Activated CD8-positive, alpha-beta T cell treated with anti-CD3 and anti-CD28 coated beads for 36 hours (primary cell): ENCODE measurements at regions of chr22 and their contacts with region 1.

Region 1: DNA sequence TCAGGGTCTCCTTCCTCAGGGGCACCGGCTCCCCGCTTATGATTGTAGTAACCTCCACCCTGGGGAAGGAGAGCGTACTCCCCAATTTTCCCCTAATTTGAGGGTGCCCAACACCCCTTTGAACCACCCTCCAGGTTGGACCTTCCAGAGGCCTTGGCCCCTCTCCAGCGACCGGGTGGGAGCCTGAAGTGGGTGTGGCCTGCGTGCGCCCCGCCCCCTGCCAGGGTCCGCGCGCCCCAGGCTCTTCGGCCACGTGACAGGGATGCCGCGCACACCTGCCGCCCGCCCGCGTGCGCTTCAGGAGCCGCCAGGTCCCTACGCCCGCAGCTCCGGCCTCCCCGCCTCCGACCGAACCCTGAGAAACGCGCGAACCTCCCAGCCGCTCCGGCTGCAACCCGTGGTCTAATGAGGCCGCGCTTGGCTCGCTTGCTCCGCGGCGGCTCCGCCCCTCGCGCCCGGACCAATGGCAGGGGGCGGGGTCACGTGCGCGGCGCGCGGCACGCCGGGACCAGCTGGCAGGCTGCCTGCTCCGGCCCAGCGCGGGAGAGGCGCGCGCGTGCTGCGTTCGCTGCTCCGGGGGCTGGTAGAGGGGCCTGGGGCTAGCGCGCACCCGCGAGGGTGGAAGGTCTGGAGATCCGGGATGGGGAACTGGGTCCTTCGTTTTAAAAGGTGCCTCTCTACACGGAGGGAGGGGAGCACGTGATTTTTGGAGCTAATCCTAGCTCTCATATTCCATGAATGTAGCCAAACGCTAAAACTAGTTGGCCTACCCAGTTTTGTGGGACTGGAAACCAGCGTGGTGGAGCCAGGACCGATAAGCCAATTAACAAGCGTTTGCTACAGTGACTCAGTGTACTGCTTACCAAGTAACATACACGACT is at the start of gene FOXRED2:
- DNase-seq: peak; percentile 90
- ATAC-seq: peak; percentile 94
- H3K4me3 Mint-ChIP-seq: peak within 1 kb of the TSS; percentile 53
- H3K27ac Mint-ChIP-seq: peak within 1 kb of the TSS; percentile 74
- H3K4me1 Mint-ChIP-seq: peaks cover 20% of the 10 kb centered on the region
- H3K27me3 Mint-ChIP-seq: no peaks in the 10 kb centered on the region
- CTCF ChIP-seq: no peak
- total RNA-seq, gene FOXRED2: 16.7 to 17.5 TPM

Region 2: DNA sequence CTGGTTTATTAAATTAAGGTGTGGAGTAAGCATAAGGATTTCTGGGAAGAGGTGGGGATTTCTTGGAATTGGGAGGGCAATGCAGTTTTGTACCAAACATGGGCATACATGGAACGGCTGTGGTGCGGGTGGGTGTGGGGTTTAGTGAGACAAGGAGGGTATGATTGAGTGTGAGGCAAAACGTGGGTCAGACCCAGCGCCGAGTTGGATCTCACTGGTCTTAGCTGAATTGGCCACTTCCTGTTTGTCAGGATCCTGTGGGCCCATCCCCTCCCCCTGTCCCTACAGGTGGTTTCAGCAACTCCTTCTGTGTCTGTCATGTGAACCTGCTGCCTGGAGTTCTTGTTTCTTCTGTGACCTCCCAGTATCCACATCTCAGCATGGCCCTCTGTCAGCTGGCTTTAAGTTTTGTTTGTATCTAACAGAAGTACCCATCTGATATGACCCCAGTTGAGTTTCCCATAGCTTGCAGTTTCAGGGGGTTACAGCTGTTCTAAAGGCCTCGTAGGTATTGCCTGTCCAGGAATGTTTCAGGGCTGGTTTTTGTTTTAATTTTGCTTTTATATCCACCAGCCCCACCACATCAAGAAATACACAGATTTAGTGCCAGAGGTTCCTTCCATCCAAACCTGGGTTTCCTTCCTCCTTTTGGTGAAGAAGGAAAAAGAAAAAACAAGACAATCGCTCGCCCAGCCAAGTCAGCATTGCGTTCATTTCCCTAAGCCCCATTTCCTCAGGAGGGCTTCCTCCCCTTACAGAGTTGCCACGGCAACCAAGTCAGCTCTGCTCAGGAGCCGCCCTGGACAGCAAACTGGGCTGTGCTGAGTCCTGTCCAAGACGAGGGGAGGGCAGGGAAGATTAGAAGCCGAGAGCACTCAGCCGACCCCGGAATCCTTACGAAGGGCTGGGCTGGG is 247.9 kb before region 1 on chr22:
- CTCF ChIA-PET with region 1: no interaction called
- POLR2A ChIA-PET with region 1: no interaction called
- intact Hi-C with region 1: no loop called
- DNase-seq: peak; percentile 76
- ATAC-seq: peak; percentile 75
- H3K4me3 Mint-ChIP-seq: peak overlapping the region; percentile 33
- H3K27ac Mint-ChIP-seq: peak overlapping the region; percentile 89
- H3K4me1 Mint-ChIP-seq: peaks cover 44% of the 10 kb centered on the region
- H3K27me3 Mint-ChIP-seq: no peaks in the 10 kb centered on the region
- CTCF ChIP-seq: no peak

Region 3: DNA sequence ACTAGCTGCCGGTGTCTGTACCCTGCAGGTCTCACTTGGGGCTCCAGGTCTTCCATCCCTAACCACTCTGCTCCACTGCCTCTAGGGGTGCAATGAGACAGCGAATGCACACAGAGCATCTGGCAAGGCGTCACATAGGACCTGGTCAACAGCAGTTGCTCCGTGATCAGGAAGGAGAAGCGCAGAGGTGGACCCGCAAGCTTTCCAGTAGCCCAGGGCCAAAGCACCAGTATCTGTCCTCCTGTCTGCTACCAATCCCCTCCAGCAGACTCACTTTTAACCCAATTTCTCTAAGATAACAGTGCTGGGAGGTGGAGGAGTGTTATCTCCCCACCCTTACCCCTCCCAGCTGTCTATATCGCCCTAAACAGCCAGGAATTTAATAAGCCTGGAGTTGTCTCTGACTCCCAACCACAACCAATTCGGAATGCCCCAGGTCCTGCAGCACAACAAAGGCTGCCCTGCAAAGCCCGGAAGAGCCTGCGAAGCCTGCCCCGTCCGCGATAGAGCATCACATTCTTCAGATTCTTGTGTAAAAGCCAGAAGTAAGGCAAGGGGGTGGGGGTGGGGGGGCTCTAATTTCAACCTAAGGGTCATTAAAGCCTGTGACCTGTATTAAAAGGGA is 138.4 kb before region 1 on chr22:
- CTCF ChIA-PET with region 1: no interaction called
- POLR2A ChIA-PET with region 1: no interaction called
- intact Hi-C with region 1: no loop called
- DNase-seq: peak; percentile 68
- ATAC-seq: no peak
- H3K4me3 Mint-ChIP-seq: peak overlapping the region; percentile 76
- H3K27ac Mint-ChIP-seq: peak overlapping the region; percentile 98
- H3K4me1 Mint-ChIP-seq: peaks cover 95% of the 10 kb centered on the region
- H3K27me3 Mint-ChIP-seq: no peaks in the 10 kb centered on the region
- CTCF ChIP-seq: peak; percentile 21

Region 4: GRCh38 chr22:36520423-36520822 is 13.5 kb after region 1 on chr22:
- CTCF ChIA-PET with region 1: interaction called, 56 read pairs
- POLR2A ChIA-PET with region 1: interaction called, 172 read pairs
- intact Hi-C with region 1: no loop called
- DNase-seq: no peak
- ATAC-seq: no peak
- H3K4me3 Mint-ChIP-seq: no peak overlapping the region
- H3K27ac Mint-ChIP-seq: no peak overlapping the region
- H3K4me1 Mint-ChIP-seq: no peaks in the 10 kb centered on the region
- H3K27me3 Mint-ChIP-seq: no peaks in the 10 kb centered on the region
- CTCF ChIP-seq: no peak